Activated CD4-positive, alpha-beta T cell treated with anti-CD3 and anti-CD28 coated beads, Interleukin-2, amount 10 ng/mL, durations not matched to agents 7 days and 5 days (primary cell): ENCODE measurements at regions of chrX and their contacts with region 1.

Region 1: DNA sequence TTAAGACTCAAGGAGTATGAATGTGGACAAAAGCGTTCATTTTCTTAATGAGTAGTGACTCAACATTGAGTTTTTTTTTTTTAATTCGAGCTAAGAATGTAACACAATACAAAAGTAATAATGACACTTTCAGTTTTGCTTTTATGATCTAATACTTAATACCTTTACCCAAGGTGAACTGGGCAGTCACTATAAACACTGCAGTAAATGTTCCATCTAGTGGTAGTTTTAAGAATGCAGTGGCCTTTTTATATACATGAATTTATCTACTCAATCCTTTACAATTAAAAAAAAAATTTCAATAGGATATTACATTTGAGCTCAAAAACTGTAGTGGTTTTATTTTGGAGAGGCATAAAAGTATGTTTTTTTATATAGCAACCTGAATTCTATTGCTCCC is 33.9 kb downstream of the PDK3 start:
- DNase-seq: no peak
- H3K4me3 Mint-ChIP-seq: peak overlapping the region; percentile 36
- H3K27ac Mint-ChIP-seq: peak overlapping the region; percentile 90
- H3K4me1 Mint-ChIP-seq: peaks cover 30% of the 10 kb centered on the region
- H3K27me3 Mint-ChIP-seq: no peaks in the 10 kb centered on the region

Region 2: DNA sequence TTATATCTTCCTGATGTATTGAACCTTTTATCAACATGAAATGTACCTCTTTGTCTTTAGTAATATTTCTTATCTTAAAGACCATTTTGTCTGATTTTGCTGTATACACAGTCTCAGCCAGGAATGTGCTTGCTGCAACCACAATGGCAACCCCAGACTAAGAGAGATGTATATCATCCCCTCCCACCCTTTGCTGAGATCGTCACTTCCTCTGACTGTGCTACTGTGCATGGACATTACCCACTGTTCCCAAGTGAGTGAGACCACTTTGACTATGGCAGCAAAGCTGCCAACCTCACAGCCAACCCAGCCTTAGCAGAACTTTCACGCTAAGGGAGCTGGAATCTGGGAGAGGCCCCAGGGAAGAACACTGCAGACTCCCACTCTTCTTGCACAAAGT is 398.3 kb before region 1 on chrX:
- CTCF ChIA-PET with region 1: no interaction called
- POLR2A ChIA-PET with region 1: no interaction called
- DNase-seq: peak; percentile 6
- H3K4me3 Mint-ChIP-seq: no peak overlapping the region
- H3K27ac Mint-ChIP-seq: no peak overlapping the region
- H3K4me1 Mint-ChIP-seq: peaks cover 18% of the 10 kb centered on the region
- H3K27me3 Mint-ChIP-seq: no peaks in the 10 kb centered on the region

Region 3: DNA sequence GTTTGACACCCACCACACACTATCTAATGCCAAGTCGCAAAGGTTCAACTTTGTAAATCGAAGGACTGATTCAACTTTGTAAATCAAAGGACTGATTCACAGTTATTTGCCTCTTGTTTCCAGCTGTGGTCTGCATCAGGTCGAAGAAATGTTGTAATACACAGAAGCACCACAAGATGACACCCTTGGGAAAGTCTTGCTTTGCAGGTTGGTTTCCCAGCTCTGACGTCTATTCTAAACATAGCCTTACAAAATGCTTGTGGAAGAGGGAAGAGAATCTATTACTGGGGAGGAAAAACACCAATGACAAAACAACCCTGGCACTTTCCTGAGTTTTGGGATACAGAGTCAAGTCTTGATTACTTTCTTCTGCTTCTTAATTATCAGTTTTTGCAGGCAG is 103.2 kb before region 1 on chrX:
- CTCF ChIA-PET with region 1: interaction called, 21 read pairs
- POLR2A ChIA-PET with region 1: no interaction called
- DNase-seq: peak; percentile 58
- H3K4me3 Mint-ChIP-seq: no peak overlapping the region
- H3K27ac Mint-ChIP-seq: no peak overlapping the region
- H3K4me1 Mint-ChIP-seq: peaks cover 5% of the 10 kb centered on the region
- H3K27me3 Mint-ChIP-seq: peaks cover 1% of the 10 kb centered on the region